Naive thymus-derived CD4-positive, alpha-beta T cell (primary cell): ENCODE measurements at regions of chr3 and their contacts with region 1.

Region 1: DNA sequence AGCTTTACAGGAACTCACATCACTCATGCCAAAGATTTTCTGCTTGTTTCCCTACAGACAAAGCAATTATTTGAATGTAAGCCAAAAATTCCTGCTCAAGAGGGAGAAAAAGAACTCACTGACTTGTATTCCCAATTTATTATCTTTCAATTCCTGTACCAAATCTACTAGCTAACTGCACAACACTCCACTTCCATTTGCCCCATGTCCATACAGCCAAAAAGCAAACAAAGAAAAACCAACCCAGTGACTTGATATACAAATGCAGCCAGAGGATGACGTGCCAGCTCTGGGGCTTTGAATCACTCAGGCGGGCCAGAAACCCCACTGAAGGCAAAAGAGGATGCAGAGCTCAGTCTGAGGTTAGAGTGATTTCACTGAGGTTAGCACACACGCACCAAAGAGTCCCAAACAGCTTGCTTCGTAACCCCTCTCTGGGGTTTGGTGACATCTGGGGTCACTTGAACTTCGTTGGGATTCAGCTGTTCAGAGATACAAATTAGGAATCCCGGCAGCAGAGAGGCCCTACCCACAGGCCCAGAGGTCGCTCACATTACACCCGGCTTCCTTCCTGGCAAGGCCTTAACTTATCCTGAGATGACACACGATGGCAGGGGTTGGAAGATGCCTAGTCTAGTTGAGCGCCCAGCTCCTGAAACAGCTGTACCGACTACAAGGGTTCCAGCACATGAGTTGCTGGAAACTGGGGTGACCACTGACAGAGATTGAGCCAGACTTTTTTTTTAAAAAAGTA is 1.6 kb downstream of the RFTN1 start:
- DNase-seq: peak; percentile 43 to 90 (median 86)
- ATAC-seq: peak; percentile 86
- H3K4me3 ChIP-seq: peak overlapping the region; percentile 79
- H3K4me3 Mint-ChIP-seq: peak overlapping the region; percentile 82 to 98 (median 94)
- H3K27ac ChIP-seq: peak overlapping the region; percentile 88
- H3K27ac Mint-ChIP-seq: peak overlapping the region; percentile 87 to 99 (median 95)
- H3K4me1 ChIP-seq: peaks cover 56 to 71% of the 10 kb centered on the region in 2 donors
- H3K4me1 Mint-ChIP-seq: peaks cover 62 to 85% (median 75%) of the 10 kb centered on the region in 7 donors
- H3K27me3 ChIP-seq: no peaks in the 10 kb centered on the region
- H3K27me3 Mint-ChIP-seq: no peaks in the 10 kb centered on the region

Region 2: DNA sequence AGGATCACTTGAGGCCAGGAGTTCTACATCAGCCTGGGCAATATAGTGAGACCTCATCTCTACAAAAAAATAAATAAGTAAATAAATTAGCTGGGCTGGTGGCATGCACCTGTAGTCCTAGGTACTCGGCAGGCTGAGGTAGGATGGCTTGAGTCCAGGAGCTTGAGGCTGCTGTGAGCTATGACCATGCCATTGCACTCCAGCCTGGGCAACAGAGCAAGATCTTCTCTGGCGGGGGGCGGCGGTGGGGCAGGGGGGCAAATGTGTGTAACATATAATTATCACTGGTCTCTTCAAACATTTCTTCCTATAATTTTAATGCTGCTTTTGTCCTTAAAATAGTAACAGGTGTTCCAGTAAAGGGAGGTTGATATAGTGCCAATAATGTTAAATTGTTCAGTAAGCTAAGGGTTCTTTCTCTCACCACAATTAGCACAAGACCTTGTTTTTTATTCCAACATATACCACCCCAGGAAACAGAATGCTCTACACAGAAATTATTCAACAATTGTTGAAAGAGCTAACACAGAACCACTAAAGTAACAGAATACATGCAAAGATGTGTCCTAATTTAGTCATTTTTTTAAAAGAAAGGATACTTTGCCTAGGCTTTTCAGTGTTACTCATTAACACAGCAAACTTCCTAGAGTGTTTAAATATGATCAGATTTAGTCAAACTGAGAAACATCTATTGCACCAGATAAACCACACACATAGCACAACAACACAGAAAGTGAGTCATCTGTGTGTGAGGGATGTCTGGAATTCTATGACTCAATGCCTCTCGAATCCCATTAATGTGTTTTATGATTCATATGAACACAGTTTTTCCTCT is 743.2 kb before region 1 on chr3:
- CTCF ChIA-PET with region 1: no interaction called
- POLR2A ChIA-PET with region 1: no interaction called
- intact Hi-C with region 1: no loop called
- DNase-seq: no peak
- ATAC-seq: peak; percentile 63
- H3K4me3 ChIP-seq: no peak overlapping the region
- H3K4me3 Mint-ChIP-seq: peak overlapping the region in 1 of 10 donors; percentile 39
- H3K27ac ChIP-seq: no peak overlapping the region
- H3K27ac Mint-ChIP-seq: peak overlapping the region in 1 of 9 donors; percentile 73
- H3K4me1 ChIP-seq: no peaks in the 10 kb centered on the region
- H3K4me1 Mint-ChIP-seq: peaks cover 8 to 30% (median 21%) of the 10 kb centered on the region in 7 donors
- H3K27me3 ChIP-seq: no peaks in the 10 kb centered on the region
- H3K27me3 Mint-ChIP-seq: no peaks in the 10 kb centered on the region

Region 3: DNA sequence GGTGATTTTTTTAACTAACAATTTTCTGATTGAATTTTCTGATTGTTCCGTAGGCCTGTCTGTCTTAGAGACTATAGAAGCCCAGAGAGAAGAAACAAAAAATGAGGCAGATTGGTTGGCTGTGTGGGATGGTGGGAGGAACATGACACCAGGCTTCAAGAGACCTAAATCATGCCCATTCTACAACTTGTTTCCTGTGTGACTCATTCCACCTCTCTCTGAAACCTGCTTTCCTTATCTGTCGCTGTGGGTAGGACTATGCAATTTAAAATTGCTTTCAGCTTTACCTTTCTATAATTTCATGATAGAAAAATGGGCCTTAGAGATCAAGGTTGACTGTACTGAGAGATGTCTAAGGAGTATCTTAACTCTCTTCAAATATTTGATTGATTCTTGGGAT is 202.3 kb before region 1 on chr3:
- CTCF ChIA-PET with region 1: interaction called, 3 read pairs
- POLR2A ChIA-PET with region 1: interaction called, 11 read pairs
- intact Hi-C with region 1: no loop called
- DNase-seq: peak in 6 of 9 donors; percentile 51 to 86 (median 59)
- ATAC-seq: peak; percentile 83
- H3K4me3 ChIP-seq: no peak overlapping the region
- H3K4me3 Mint-ChIP-seq: peak overlapping the region; percentile 25 to 90 (median 78)
- H3K27ac ChIP-seq: peak overlapping the region; percentile 48
- H3K27ac Mint-ChIP-seq: peak overlapping the region; percentile 85 to 98 (median 91)
- H3K4me1 ChIP-seq: peaks cover 92 to 94% of the 10 kb centered on the region in 2 donors
- H3K4me1 Mint-ChIP-seq: peaks cover 74 to 97% (median 92%) of the 10 kb centered on the region in 7 donors
- H3K27me3 ChIP-seq: no peaks in the 10 kb centered on the region
- H3K27me3 Mint-ChIP-seq: no peaks in the 10 kb centered on the region

Region 4: GRCh38 chr3:16378920-16379319 is 132.9 kb before region 1 on chr3:
- CTCF ChIA-PET with region 1: interaction called, 5 read pairs
- POLR2A ChIA-PET with region 1: interaction called, 3 read pairs
- intact Hi-C with region 1: loop called (anchors 2 kb)
- DNase-seq: no peak
- ATAC-seq: peak; percentile 19
- H3K4me3 ChIP-seq: no peak overlapping the region
- H3K4me3 Mint-ChIP-seq: peak overlapping the region in 8 of 10 donors; percentile 26 to 85 (median 42)
- H3K27ac ChIP-seq: no peak overlapping the region
- H3K27ac Mint-ChIP-seq: peak overlapping the region in 8 of 9 donors; percentile 54 to 94 (median 90)
- H3K4me1 ChIP-seq: peaks cover 28 to 60% of the 10 kb centered on the region in 2 donors
- H3K4me1 Mint-ChIP-seq: peaks cover 52 to 98% (median 87%) of the 10 kb centered on the region in 7 donors
- H3K27me3 ChIP-seq: no peaks in the 10 kb centered on the region
- H3K27me3 Mint-ChIP-seq: no peaks in the 10 kb centered on the region

Region 5: GRCh38 chr3:16482770-16483531 is 28.9 kb before region 1 on chr3:
- CTCF ChIA-PET with region 1: interaction called, 4 read pairs
- POLR2A ChIA-PET with region 1: interaction called, 39 read pairs
- intact Hi-C with region 1: loop called (anchors 1 to 2 kb)
- DNase-seq: peak in 8 of 9 donors; percentile 14 to 49 (median 43)
- ATAC-seq: peak; percentile 87
- H3K4me3 ChIP-seq: no peak overlapping the region
- H3K4me3 Mint-ChIP-seq: peak overlapping the region; percentile 61 to 90 (median 76)
- H3K27ac ChIP-seq: peak overlapping the region; percentile 72
- H3K27ac Mint-ChIP-seq: peak overlapping the region; percentile 80 to 99 (median 91)
- H3K4me1 ChIP-seq: peaks cover 27 to 61% of the 10 kb centered on the region in 2 donors
- H3K4me1 Mint-ChIP-seq: peaks cover 47 to 88% (median 80%) of the 10 kb centered on the region in 7 donors
- H3K27me3 ChIP-seq: no peaks in the 10 kb centered on the region
- H3K27me3 Mint-ChIP-seq: no peaks in the 10 kb centered on the region

Region 6: DNA sequence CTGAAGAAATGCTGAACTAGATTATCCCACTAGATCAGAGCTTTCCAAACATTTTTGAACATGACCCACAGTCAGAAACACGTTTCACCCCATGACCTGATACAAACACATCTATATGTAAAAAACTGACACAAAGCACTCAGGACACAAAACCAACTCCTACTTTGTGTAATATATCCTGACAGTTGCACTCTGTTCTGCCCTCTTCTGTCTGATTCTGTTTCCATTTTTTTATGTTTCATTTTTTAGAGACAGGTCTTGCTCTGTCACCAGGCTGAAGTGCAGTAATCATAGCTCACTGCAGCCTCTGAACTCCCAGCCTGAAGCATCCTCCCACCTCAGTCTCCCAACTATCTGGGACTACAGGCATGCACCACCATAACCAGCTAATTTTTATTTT is 17.4 kb after region 1 on chr3:
- CTCF ChIA-PET with region 1: interaction called, 3 read pairs
- POLR2A ChIA-PET with region 1: interaction called, 9 read pairs
- intact Hi-C with region 1: loop called in 1 of 2 experiments (anchors 1 kb)
- DNase-seq: peak in 5 of 9 donors; percentile 32 to 54 (median 39)
- ATAC-seq: peak; percentile 62
- H3K4me3 ChIP-seq: no peak overlapping the region
- H3K4me3 Mint-ChIP-seq: no peak overlapping the region
- H3K27ac ChIP-seq: no peak overlapping the region
- H3K27ac Mint-ChIP-seq: peak overlapping the region in 6 of 9 donors; percentile 26 to 72 (median 58)
- H3K4me1 ChIP-seq: no peaks in the 10 kb centered on the region
- H3K4me1 Mint-ChIP-seq: peaks cover 4 to 19% (median 12%) of the 10 kb centered on the region in 7 donors
- H3K27me3 ChIP-seq: no peaks in the 10 kb centered on the region
- H3K27me3 Mint-ChIP-seq: peaks cover 0 to 19% (median 0%) of the 10 kb centered on the region in 5 donors

Region 7: DNA sequence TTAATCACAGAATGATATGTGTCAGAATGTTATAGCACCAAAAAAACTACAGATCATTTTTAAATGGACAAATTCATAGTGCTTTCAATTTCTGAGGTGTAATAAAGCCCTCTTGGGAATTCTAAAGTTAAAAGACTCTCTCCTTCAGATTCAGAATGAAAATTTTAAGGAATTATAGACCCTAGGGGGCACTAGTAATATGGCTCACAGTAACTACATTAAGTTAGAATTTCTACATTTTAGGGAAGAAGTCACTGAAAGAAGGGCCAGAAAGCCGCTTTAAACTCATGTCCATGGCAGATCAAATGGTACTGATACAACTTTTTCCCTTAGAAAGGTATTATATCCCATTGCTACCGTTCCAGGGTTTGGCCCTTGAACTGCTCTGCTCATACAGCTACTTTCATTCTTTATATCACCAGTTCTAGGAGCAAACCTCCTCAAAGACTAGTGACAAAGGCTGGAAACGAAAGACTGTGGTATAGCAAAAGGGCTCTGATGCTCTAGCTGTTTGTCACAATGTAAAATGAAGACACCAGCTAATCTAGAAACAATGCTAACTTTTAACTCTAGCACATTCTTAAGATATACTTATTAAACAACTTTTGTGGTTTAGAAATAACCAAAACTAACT is 75.3 kb after region 1 on chr3:
- CTCF ChIA-PET with region 1: no interaction called
- POLR2A ChIA-PET with region 1: no interaction called
- intact Hi-C with region 1: no loop called
- DNase-seq: no peak
- ATAC-seq: no peak
- H3K4me3 ChIP-seq: no peak overlapping the region
- H3K4me3 Mint-ChIP-seq: no peak overlapping the region
- H3K27ac ChIP-seq: no peak overlapping the region
- H3K27ac Mint-ChIP-seq: no peak overlapping the region
- H3K4me1 ChIP-seq: no peaks in the 10 kb centered on the region
- H3K4me1 Mint-ChIP-seq: peaks cover 0 to 16% (median 0%) of the 10 kb centered on the region in 7 donors
- H3K27me3 ChIP-seq: no peaks in the 10 kb centered on the region
- H3K27me3 Mint-ChIP-seq: peaks cover 0 to 31% (median 0%) of the 10 kb centered on the region in 5 donors

Region 8: GRCh38 chr3:17151598-17152373 is 639.9 kb after region 1 on chr3:
- CTCF ChIA-PET with region 1: no interaction called
- POLR2A ChIA-PET with region 1: no interaction called
- intact Hi-C with region 1: loop called in 1 of 2 experiments (anchors 5 kb)
- DNase-seq: peak; percentile 27 to 81 (median 46)
- ATAC-seq: peak; percentile 87
- H3K4me3 ChIP-seq: peak overlapping the region; percentile 38
- H3K4me3 Mint-ChIP-seq: peak overlapping the region; percentile 38 to 86 (median 65)
- H3K27ac ChIP-seq: peak overlapping the region; percentile 45
- H3K27ac Mint-ChIP-seq: peak overlapping the region; percentile 41 to 95 (median 88)
- H3K4me1 ChIP-seq: peaks cover 18 to 33% of the 10 kb centered on the region in 2 donors
- H3K4me1 Mint-ChIP-seq: peaks cover 15 to 65% (median 28%) of the 10 kb centered on the region in 7 donors
- H3K27me3 ChIP-seq: no peaks in the 10 kb centered on the region
- H3K27me3 Mint-ChIP-seq: peaks cover 0 to 4% (median 0%) of the 10 kb centered on the region in 5 donors